ENCODE measurements at regions of chr1 and their contacts with region 1.

Region 1: GRCh38 chr1:213883618-213884017 is 104.2 kb upstream of the PROX1 start:
- DNase-seq: no peak
- ATAC-seq: no peak
- H3K4me3 Mint-ChIP-seq: no peak overlapping the region
- H3K27ac Mint-ChIP-seq: no peak overlapping the region
- H3K4me1 Mint-ChIP-seq: 0 out of 2 replicates have a peak, but pooled peaks cover 5% of the 10 kb centered on the region
- H3K27me3 Mint-ChIP-seq: no peaks in the 10 kb centered on the region
- CTCF ChIP-seq: no peak

Region 2: DNA sequence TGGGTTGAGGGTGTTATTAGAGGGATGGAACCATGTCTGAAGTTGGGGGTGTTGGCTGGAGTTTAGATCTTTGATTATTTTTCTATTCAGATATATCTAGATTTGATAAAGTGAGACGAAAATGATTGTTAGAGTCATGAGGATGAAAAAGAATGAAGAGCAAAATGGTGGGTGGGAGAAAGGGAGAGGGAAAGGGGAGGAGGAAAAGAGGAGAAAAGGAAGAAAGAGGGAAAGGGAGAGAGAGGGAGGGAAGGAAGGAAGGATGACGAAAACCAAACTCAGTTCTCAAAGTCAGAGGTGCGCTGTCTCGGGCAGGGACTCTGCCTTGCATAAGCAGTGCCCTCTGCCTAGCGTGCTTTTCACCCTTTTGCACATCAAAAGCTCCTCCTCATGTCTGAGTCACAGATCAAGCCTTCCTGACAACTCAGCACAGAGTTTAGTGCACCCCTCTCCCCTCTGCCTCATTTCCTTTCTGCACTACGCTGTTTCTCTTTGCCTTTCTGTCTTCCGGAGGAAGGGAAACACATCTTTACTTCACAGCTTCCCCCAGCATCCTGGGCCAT is 121.7 kb before region 1 on chr1:
- CTCF ChIA-PET with region 1: no interaction called
- POLR2A ChIA-PET with region 1: no interaction called
- DNase-seq: peak; percentile 13
- ATAC-seq: peak; percentile 79
- H3K4me3 Mint-ChIP-seq: peak overlapping the region; percentile 0; the same call in 1 of the 2 replicates
- H3K27ac Mint-ChIP-seq: no peak overlapping the region
- H3K4me1 Mint-ChIP-seq: peaks cover 29% of the 10 kb centered on the region
- H3K27me3 Mint-ChIP-seq: no peaks in the 10 kb centered on the region
- CTCF ChIP-seq: no peak

Region 3: GRCh38 chr1:213858581-213858980 is 25.0 kb before region 1 on chr1:
- CTCF ChIA-PET with region 1: no interaction called
- POLR2A ChIA-PET with region 1: no interaction called
- DNase-seq: no peak
- ATAC-seq: peak; percentile 56
- H3K4me3 Mint-ChIP-seq: no peak overlapping the region
- H3K27ac Mint-ChIP-seq: no peak overlapping the region
- H3K4me1 Mint-ChIP-seq: 0 out of 2 replicates have a peak, but pooled peaks cover 6% of the 10 kb centered on the region
- H3K27me3 Mint-ChIP-seq: no peaks in the 10 kb centered on the region
- CTCF ChIP-seq: no peak

Region 4: GRCh38 chr1:213899413-213899812 is 15.8 kb after region 1 on chr1:
- CTCF ChIA-PET with region 1: no interaction called
- POLR2A ChIA-PET with region 1: no interaction called
- DNase-seq: no peak
- ATAC-seq: no peak
- H3K4me3 Mint-ChIP-seq: no peak overlapping the region
- H3K27ac Mint-ChIP-seq: no peak overlapping the region
- H3K4me1 Mint-ChIP-seq: no peaks in the 10 kb centered on the region
- H3K27me3 Mint-ChIP-seq: no peaks in the 10 kb centered on the region
- CTCF ChIP-seq: no peak

Region 5: DNA sequence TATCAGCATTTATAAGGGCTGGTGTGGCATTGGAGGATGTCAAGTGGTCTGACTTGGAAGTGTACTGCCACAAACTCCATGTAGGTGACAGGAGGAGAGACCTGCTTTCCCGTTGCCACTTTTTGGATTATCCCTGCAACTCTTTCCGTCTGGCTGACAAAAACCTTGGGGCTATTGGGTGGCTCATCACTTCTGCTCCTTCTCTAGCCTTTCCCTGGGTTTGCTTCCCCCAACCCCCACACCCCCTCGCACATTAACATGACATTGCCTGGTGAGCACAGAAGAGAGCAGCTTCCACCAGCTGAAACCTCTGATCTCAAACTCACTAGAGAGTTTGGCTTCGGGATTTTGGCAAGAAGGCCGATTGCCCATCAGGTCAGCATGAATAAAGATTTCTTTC is 143.4 kb after region 1 on chr1:
- CTCF ChIA-PET with region 1: no interaction called
- POLR2A ChIA-PET with region 1: interaction called, 11 read pairs
- DNase-seq: peak; percentile 32
- ATAC-seq: peak; percentile 86
- H3K4me3 Mint-ChIP-seq: peak overlapping the region; percentile 35
- H3K27ac Mint-ChIP-seq: peak overlapping the region; percentile 92
- H3K4me1 Mint-ChIP-seq: peaks cover 67% of the 10 kb centered on the region
- H3K27me3 Mint-ChIP-seq: no peaks in the 10 kb centered on the region; the same call in 1 of the 2 replicates
- CTCF ChIP-seq: no peak